Gastrocnemius medialis (tissue), 4 donors: ENCODE measurements at regions of chr18 and their contacts with region 1.

Region 1: DNA sequence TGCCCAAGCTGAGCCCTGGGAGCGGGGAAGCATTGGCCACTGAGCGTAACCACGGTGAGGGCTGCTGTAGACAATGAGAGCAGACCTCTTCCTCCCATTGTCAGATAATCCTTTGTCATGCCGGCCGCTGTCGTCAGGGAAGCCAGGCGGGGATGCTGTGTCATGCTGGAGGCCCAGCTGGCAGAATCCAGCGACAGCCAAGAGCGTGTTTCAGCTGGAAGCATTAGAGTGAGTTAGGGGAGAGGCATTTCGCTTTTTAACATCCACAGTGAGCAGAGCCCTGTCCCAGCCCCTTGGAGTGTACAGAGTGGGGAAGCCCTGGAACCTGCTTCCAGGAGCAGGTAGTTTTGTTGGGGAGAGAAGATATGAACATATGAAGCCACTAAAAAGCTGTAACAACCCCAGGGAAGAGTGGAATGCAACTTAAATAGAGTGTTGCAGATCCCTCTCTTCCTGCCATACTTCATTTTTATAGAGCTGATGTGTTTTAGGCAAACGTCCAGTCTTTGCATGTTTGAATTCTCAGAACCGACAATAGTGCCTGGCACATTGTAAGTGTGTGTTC is 7.0 kb downstream of the CTIF start:
- DNase-seq: peak; percentile 23 to 70
- ATAC-seq: peak in 1 of 2 donors; percentile 25
- H3K4me3 ChIP-seq: no peak overlapping the region
- H3K27ac ChIP-seq: peak overlapping the region; percentile 53 to 77 (median 72)
- H3K4me1 ChIP-seq: peaks cover 55 to 73% of the 10 kb centered on the region in 2 donors
- H3K27me3 ChIP-seq: no peaks in the 10 kb centered on the region
- CTCF ChIP-seq: no peak
- POLR2A ChIP-seq: no peak

Region 2: DNA sequence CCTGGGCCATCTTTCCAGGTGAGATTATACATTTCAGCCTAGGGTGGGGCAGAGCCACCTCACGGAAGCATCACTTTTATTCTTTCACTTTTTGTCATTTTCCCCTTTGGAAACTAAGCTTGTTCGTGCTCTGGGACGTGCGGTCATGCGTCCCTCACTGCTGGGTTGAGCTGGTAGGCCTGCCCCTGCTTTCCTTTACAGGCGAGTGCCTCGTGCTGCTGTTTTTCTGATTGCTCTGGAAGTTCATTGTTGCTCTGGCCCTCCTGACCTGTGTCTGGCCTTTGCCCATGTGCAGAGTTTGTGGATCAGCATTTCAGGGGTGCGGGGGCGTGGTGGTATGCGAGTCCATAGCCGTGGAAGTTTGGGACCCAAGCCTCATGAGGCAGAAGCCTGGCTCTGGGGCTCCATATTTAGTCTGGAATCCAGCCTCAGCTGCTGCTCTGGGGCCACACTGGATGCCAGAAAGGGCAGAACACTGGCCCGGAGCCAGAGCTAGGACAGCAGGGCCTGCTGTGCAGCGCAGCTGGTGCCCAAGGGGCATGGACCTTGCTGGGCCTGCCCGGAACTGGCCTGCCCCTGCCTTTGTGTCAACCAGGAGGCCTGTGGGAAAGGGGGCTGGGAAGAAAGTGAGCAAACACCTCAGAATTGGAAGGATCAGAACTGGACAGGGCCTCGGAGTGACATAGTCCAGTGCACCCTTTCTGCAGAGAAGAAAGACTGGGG is 44.1 kb after region 1 on chr18:
- in situ Hi-C with region 1: no loop called
- intact Hi-C with region 1: no loop called
- DNase-seq: peak in 1 of 2 donors; percentile 61
- ATAC-seq: peak; percentile 59 to 68
- H3K4me3 ChIP-seq: no peak overlapping the region
- H3K27ac ChIP-seq: no peak overlapping the region
- H3K4me1 ChIP-seq: peaks cover 23 to 31% of the 10 kb centered on the region in 2 donors
- H3K27me3 ChIP-seq: no peaks in the 10 kb centered on the region
- CTCF ChIP-seq: no peak
- POLR2A ChIP-seq: no peak

Region 3: GRCh38 chr18:48600456-48601090 is 54.7 kb after region 1 on chr18:
- in situ Hi-C with region 1: no loop called
- intact Hi-C with region 1: loop called (anchors 5 kb)
- DNase-seq: peak; percentile 26 to 50
- ATAC-seq: peak; percentile 92 to 97
- H3K4me3 ChIP-seq: no peak overlapping the region
- H3K27ac ChIP-seq: peak overlapping the region in 3 of 4 donors; percentile 11 to 61 (median 45)
- H3K4me1 ChIP-seq: peaks cover 35 to 39% of the 10 kb centered on the region in 2 donors
- H3K27me3 ChIP-seq: no peaks in the 10 kb centered on the region
- CTCF ChIP-seq: no peak
- POLR2A ChIP-seq: no peak